HepG2 (cell line): ENCODE measurements at regions of chr2 and their contacts with region 1.

Region 1: GRCh38 chr2:69177785-69178636 is 165.0 kb downstream of the ANTXR1 start:
- DNase-seq: peak; percentile 99
- ATAC-seq: peak; percentile 97
- H3K4me3 ChIP-seq: peak overlapping the region; percentile 2 to 36 (median 4); a peak in 4 of 6 replicates
- H3K27ac ChIP-seq: peak overlapping the region; percentile 94
- H3K4me1 ChIP-seq: peaks cover 68% of the 10 kb centered on the region
- H3K27me3 ChIP-seq: no peaks in the 10 kb centered on the region
- CTCF ChIP-seq: peak; percentile 57
- EP300 ChIP-seq: peak; percentile 86 to 97
- POLR2A ChIP-seq: peak; percentile 82 to 85
- RAD21 ChIP-seq: peak; percentile 78

Region 2: DNA sequence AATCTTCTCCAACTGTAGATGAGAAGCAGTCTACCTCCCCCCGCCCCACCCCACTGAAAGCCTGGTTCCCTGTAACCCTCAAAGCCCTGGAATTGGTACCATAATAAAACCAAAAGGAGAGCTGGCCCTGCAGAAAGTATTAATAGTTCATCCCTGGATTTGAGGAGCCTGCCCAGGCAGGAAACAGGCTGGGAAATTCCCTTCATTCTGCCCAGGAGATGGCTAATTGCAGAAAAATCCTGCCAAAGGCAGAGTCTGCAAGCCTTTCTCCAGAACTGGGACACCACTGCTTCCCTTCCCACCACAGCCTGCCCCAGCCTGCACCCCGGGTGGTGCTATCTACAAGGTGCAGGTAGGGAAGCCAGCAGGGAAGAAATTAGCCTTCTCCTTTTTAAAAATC is 241.6 kb before region 1 on chr2:
- CTCF ChIA-PET with region 1: no interaction called
- POLR2A ChIA-PET with region 1: no interaction called
- in situ Hi-C with region 1: no loop called
- intact Hi-C with region 1: no loop called
- DNase-seq: no peak
- ATAC-seq: no peak
- H3K4me3 ChIP-seq: no peak overlapping the region
- H3K27ac ChIP-seq: no peak overlapping the region
- H3K4me1 ChIP-seq: no peaks in the 10 kb centered on the region
- H3K27me3 ChIP-seq: peaks cover 0 to 32% of the 10 kb centered on the region in 2 experiments; a peak in 3 of 5 replicates
- CTCF ChIP-seq: no peak
- EP300 ChIP-seq: no peak
- POLR2A ChIP-seq: no peak
- RAD21 ChIP-seq: no peak

Region 3: DNA sequence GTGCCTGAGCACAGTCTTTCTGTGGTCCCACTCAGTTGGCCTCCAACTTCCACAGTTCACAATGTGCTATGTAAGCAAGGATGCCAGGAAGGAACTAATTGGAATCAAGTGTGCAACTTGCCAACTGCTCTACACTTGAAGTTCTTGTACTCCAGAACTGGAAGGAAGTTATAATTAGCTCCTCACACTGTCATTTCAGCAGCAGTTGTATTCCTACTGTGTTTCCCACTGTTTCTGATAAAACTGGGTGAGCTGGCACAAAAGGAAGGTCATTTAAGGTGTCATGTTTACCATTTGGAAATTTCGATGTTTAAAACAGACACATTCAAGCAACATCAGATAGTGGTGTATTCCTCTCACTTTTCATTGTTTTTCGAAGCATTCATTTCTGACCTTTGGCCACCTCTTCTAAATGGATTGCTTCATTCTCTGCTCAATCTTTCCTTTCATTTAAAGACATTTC is 80.8 kb before region 1 on chr2:
- CTCF ChIA-PET with region 1: no interaction called
- POLR2A ChIA-PET with region 1: interaction called, 7 read pairs
- in situ Hi-C with region 1: no loop called
- intact Hi-C with region 1: loop called (anchors 1 kb)
- DNase-seq: peak; percentile 86
- ATAC-seq: peak; percentile 85
- H3K4me3 ChIP-seq: no peak overlapping the region
- H3K27ac ChIP-seq: peak overlapping the region; percentile 54
- H3K4me1 ChIP-seq: peaks cover 20% of the 10 kb centered on the region
- H3K27me3 ChIP-seq: no peaks in the 10 kb centered on the region
- CTCF ChIP-seq: no peak
- EP300 ChIP-seq: peak in 1 of 2 experiments; percentile 81; a peak in 2 of 4 replicates
- POLR2A ChIP-seq: no peak
- RAD21 ChIP-seq: no peak

Region 4: DNA sequence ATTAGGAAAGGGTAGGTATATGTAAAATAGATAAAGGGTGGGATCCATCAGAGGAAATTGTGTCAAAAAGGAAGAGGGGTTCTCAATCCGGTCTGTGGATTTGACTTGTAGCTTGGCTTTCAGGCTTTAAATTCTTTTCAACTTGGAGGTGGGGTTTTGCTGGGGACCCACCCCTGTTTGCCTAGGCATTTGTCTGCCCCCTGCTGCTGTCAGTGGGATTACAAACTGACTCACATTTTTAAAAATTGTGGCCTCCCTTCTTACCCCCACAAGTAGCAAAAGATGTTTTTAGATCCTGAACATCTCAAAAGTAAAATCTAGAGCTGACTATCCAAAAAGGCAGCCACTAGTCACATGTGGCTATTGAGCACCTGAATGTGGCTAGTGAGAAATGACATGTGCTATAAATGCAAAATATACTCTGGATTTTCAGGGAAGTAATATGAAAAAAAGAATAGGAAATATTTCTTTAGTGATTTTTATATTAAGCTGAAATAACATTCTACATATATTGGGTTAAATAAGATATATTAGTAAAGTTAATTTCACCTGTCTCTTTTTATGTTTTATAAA is 30.1 kb after region 1 on chr2:
- CTCF ChIA-PET with region 1: no interaction called
- POLR2A ChIA-PET with region 1: interaction called, 13 read pairs
- in situ Hi-C with region 1: no loop called
- intact Hi-C with region 1: no loop called
- DNase-seq: no peak
- ATAC-seq: no peak
- H3K4me3 ChIP-seq: no peak overlapping the region
- H3K27ac ChIP-seq: no peak overlapping the region
- H3K4me1 ChIP-seq: peaks cover 43% of the 10 kb centered on the region
- H3K27me3 ChIP-seq: no peaks in the 10 kb centered on the region
- CTCF ChIP-seq: peak; percentile 30; the same call in 1 of the 2 replicates
- EP300 ChIP-seq: no peak
- POLR2A ChIP-seq: no peak
- RAD21 ChIP-seq: 0 out of 2 replicates have a peak, but pooled peaks have one; percentile 17

Region 5: DNA sequence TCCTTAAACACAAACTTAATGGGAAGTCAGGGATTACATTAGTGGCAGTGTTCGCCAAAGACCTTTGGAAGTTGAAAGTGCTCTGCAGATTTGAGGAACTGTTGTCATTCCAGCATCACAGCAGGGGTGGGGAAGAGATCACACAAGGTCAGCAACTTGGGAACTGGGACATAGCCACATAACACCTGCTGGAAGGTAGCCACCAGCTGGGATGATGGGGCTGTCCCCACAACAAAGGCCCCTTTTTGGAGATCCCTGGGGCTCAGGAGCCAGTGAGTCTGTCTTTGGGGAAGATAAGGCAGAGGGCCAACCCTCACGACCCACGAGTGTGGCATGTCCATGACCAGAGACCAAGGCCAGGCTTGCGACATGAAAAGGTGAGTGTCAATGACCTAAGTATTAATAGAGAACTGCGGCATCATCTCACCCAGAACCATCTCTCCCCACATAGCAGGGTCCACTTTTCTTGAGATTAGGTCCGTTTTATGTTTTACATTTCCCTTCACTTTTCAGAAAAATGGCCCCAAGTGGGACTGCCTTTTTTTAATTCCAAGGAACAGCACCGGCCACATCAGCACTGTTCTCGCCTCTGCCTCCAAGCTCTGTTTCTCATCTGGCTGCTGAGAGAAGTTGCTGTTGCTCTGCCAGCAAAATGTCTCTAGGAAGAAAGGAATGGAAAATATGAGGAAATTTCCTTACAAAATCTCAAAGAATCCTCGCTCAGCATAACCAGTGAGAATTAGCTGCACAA is 102.1 kb after region 1 on chr2:
- CTCF ChIA-PET with region 1: no interaction called
- POLR2A ChIA-PET with region 1: no interaction called
- in situ Hi-C with region 1: no loop called
- intact Hi-C with region 1: loop called (anchors 5 kb)
- DNase-seq: peak; percentile 92
- ATAC-seq: peak; percentile 91
- H3K4me3 ChIP-seq: peak overlapping the region in 2 of 3 experiments; percentile 28 to 31; a peak in 3 of 6 replicates
- H3K27ac ChIP-seq: peak overlapping the region; percentile 67
- H3K4me1 ChIP-seq: peaks cover 50% of the 10 kb centered on the region
- H3K27me3 ChIP-seq: no peaks in the 10 kb centered on the region
- CTCF ChIP-seq: no peak
- EP300 ChIP-seq: peak; percentile 94; a peak in 2 of 4 replicates
- POLR2A ChIP-seq: peak in 1 of 2 experiments; percentile 72; a peak in 2 of 4 replicates
- RAD21 ChIP-seq: no peak

Region 6: GRCh38 chr2:69436938-69437750 is 259.1 kb after region 1 on chr2 and contains the start of gene NFU1:
- CTCF ChIA-PET with region 1: no interaction called
- POLR2A ChIA-PET with region 1: interaction called, 11 read pairs
- in situ Hi-C with region 1: no loop called
- intact Hi-C with region 1: no loop called
- DNase-seq: peak; percentile 95
- ATAC-seq: peak; percentile 98
- H3K4me3 ChIP-seq: peak within 1 kb of the TSS; percentile 75 to 94 (median 87)
- H3K27ac ChIP-seq: peak within 1 kb of the TSS; percentile 83
- H3K4me1 ChIP-seq: peaks cover 21% of the 10 kb centered on the region
- H3K27me3 ChIP-seq: no peaks in the 10 kb centered on the region; a peak in 1 of 5 replicates
- CTCF ChIP-seq: peak; percentile 93
- EP300 ChIP-seq: 0 out of 4 replicates have a peak, but pooled peaks of 1 of the 2 experiments have one; percentile 28
- POLR2A ChIP-seq: peak; percentile 95 to 96
- RAD21 ChIP-seq: peak; percentile 59
- total RNA-seq, gene NFU1: 84.0 and 99.6 TPM in 2 replicates

Region 7: DNA sequence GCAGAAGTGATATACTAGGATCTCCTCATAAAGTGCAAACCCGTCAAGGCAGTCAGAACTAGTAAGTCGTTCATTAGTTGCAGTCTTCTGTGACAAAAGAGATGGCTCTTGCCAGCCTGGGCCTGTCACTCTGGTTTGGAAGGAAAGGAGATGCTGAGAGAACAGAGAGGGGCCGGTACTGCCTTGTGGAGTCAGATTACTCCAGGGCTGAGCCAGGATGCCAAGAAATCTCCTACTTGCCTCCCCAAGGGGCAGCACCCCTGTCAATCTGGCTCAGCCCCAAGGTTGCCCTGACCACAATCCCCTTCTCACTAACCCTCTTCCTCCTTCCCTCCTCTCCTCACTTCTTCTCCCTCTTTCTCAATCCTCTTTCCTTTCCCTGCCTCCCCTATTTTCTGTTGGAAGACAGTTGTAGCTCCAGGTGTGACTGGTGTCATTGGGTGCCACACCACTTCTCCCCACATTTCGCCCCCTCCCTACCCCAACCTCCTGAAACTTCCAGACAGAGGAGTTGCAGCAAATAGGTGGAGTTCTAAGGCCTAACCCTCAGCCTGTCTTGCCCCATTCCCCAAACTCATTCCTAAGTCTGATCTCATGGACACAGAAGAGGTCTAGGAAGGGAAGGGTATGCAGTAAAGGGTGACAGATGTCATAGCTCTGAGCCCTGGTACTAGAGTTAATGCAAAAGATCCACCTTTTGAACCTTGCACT is 846.4 kb after region 1 on chr2:
- CTCF ChIA-PET with region 1: no interaction called
- POLR2A ChIA-PET with region 1: no interaction called
- in situ Hi-C with region 1: no loop called
- intact Hi-C with region 1: no loop called
- DNase-seq: no peak
- ATAC-seq: no peak
- H3K4me3 ChIP-seq: no peak overlapping the region
- H3K27ac ChIP-seq: no peak overlapping the region
- H3K4me1 ChIP-seq: no peaks in the 10 kb centered on the region
- H3K27me3 ChIP-seq: no peaks in the 10 kb centered on the region
- CTCF ChIP-seq: no peak
- EP300 ChIP-seq: no peak
- POLR2A ChIP-seq: no peak
- RAD21 ChIP-seq: no peak